ENCODE measurements at regions of chr12 and their contacts with region 1.

Region 1: DNA sequence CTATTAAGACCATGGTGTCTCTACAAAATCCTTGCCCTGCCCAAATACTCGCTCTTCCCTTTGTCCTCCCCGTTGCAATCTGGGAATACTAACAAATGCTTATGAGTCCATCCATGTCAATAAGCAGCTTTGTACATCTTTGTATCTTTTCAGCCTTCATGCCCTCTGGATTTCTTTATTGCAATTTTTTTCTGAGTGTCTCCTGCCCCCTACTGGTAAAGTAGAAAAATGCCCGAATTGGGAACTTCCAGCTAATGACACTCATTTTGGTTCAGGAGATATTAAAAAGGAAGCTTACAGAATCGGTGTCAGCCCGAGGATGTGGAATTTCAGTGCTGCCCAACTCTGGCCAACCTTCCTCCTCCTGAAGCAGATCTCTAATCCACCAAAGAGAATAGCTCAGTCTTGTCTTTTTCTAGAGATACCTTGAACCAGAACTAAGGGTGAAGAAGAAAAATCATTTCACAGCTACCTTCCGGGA is 46.0 kb downstream of the SH2B3 start:
- DNase-seq: peak in 3 of 10 donors; percentile 9 to 32 (median 28)
- H3K4me3 ChIP-seq: no peak overlapping the region
- H3K27ac ChIP-seq: peak overlapping the region in 51 of 59 donors; percentile 10 to 88 (median 66)
- H3K27me3 ChIP-seq: no peaks in the 10 kb centered on the region
- CTCF ChIP-seq: peak; percentile 82 to 98 (median 91)

Region 2: GRCh38 chr12:111368788-111369495 is 82.7 kb before region 1 on chr12 and contains the start of gene PHETA1:
- intact Hi-C with region 1: no loop called
- DNase-seq: peak; percentile 86 to 95 (median 91)
- H3K4me3 ChIP-seq: peak within 1 kb of the TSS; percentile 64 to 99 (median 89)
- H3K27ac ChIP-seq: peak within 1 kb of the TSS in 43 of 59 donors; percentile 2 to 84 (median 50)
- H3K27me3 ChIP-seq: no peaks in the 10 kb centered on the region
- CTCF ChIP-seq: peak in 41 of 56 donors; percentile 14 to 64 (median 36)
- total RNA-seq, gene PHETA1: 2.7 to 15.7 (median 7.2) TPM

Region 3: GRCh38 chr12:111405149-111405860 is 46.4 kb before region 1 on chr12:
- intact Hi-C with region 1: loop called (anchors 1 to 5 kb)
- DNase-seq: peak; percentile 82 to 93 (median 88)
- H3K4me3 ChIP-seq: peak overlapping the region; percentile 57 to 97 (median 87)
- H3K27ac ChIP-seq: peak overlapping the region in 50 of 59 donors; percentile 26 to 93 (median 78)
- H3K27me3 ChIP-seq: no peaks in the 10 kb centered on the region
- CTCF ChIP-seq: peak in 53 of 56 donors; percentile 23 to 75 (median 58)

Region 4: GRCh38 chr12:111673503-111673902 is 221.8 kb after region 1 on chr12:
- intact Hi-C with region 1: loop called in 1 of 2 experiments (anchors 10 kb)
- DNase-seq: no peak
- H3K4me3 ChIP-seq: no peak overlapping the region
- H3K27ac ChIP-seq: peak overlapping the region in 9 of 59 donors; percentile 9 to 50 (median 27)
- H3K27me3 ChIP-seq: no peaks in the 10 kb centered on the region
- CTCF ChIP-seq: peak in 52 of 56 donors; percentile 11 to 69 (median 44)